Activated T-helper 2 cell treated with anti-CD3 and anti-CD28 coated beads, Interferon-gamma antibody, Interleukin-2, Interleukin-4, amounts not matched to agents 10 μg/mL and 5 μg/mL and 100 μg/mL, durations not matched to agents 14 hours and 24 hours and 36 hours (primary cell): ENCODE measurements at regions of chr1 and their contacts with region 1.

Region 1: GRCh38 chr1:168082008-168082876 is 54.5 kb downstream of the GPR161 start:
- DNase-seq: peak; percentile 62
- H3K4me3 Mint-ChIP-seq: no peak overlapping the region
- H3K27ac Mint-ChIP-seq: no peak overlapping the region
- H3K4me1 Mint-ChIP-seq: peaks cover 11% of the 10 kb centered on the region
- H3K27me3 Mint-ChIP-seq: peaks cover 2% of the 10 kb centered on the region

Region 2: GRCh38 chr1:167721617-167722151 is 360.6 kb before region 1 on chr1 and contains the start of gene MPZL1:
- intact Hi-C with region 1: loop called (anchors 5 kb)
- DNase-seq: peak; percentile 91
- H3K4me3 Mint-ChIP-seq: peak within 1 kb of the TSS; percentile 92
- H3K27ac Mint-ChIP-seq: peak within 1 kb of the TSS; percentile 91
- H3K4me1 Mint-ChIP-seq: peaks cover 50% of the 10 kb centered on the region
- H3K27me3 Mint-ChIP-seq: no peaks in the 10 kb centered on the region
- total RNA-seq, gene MPZL1: 36.7 and 40.5 TPM in 2 replicates

Region 3: GRCh38 chr1:168097921-168098528 is 15.8 kb after region 1 on chr1:
- intact Hi-C with region 1: no loop called
- DNase-seq: no peak
- H3K4me3 Mint-ChIP-seq: no peak overlapping the region
- H3K27ac Mint-ChIP-seq: no peak overlapping the region
- H3K4me1 Mint-ChIP-seq: no peaks in the 10 kb centered on the region
- H3K27me3 Mint-ChIP-seq: peaks cover 6% of the 10 kb centered on the region

Region 4: DNA sequence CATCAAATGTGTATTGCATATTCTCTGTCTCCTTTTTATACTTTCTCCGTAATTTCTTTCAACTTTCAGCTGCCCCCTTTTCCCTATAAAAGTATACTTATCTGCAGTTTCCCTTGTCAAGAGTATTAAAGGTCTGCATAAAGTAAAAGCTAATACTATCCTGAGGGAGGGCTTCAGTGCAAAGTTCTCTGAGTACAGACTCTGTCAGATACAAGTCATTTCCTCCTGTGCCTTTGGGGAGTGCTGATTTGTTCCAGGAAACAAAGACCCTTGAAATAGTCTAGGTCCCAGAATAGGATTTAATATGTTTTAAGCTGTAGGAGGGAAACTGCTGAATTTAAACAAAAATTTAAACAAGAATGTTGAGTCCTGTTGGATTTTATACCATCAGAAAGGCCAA is 42.8 kb after region 1 on chr1:
- intact Hi-C with region 1: no loop called
- DNase-seq: no peak
- H3K4me3 Mint-ChIP-seq: no peak overlapping the region
- H3K27ac Mint-ChIP-seq: no peak overlapping the region
- H3K4me1 Mint-ChIP-seq: no peaks in the 10 kb centered on the region
- H3K27me3 Mint-ChIP-seq: peaks cover 39% of the 10 kb centered on the region

Region 5: DNA sequence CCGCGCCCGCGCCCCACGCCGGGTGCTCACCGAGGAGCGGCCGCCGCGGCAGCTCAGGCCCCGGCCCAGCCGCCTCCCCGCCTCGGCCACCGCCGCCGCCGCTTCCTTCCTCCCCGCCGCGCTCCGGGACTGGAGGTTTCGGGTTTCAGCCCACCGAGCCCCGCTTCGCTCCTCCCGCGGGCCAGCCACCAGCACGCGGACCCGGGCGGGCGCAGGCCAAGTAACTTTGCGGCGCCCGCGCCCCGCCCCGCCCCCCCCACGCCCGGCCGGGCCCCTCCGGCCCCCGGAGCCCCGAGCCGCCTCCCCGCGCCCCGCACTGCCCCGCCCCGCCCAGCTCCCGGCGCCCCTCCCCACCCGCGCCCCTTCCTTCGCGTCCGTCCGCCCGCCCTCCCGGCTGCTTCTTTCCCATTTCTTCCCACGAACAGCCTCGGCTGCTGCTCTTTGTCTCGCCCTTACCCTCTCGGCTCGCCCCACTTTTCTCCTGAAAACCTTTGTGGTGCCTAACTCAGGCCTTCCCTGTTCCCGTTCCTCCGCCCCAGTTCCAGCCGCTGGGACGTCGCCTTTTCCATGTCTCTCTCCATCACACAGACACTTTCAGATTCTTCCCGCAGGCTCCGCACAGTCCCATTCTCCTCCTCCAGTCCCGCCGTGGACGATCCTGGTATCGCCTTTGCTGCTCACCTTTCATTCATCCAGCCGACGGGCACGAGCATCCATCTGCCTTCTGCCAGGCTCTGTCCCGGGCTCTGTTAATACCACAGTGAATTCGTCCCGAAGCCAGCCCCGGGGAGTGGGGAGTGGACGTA is 54.7 kb after region 1 on chr1 and contains the start of gene GPR161:
- intact Hi-C with region 1: loop called (anchors 5 kb)
- DNase-seq: peak; percentile 29
- H3K4me3 Mint-ChIP-seq: peak within 1 kb of the TSS; percentile 85
- H3K27ac Mint-ChIP-seq: peak within 1 kb of the TSS; percentile 33
- H3K4me1 Mint-ChIP-seq: peaks cover 16% of the 10 kb centered on the region
- H3K27me3 Mint-ChIP-seq: peaks cover 48% of the 10 kb centered on the region
- total RNA-seq, gene GPR161: 1.3 and 2.4 TPM in 2 replicates

Region 6: GRCh38 chr1:168321945-168322344 is 239.7 kb after region 1 on chr1:
- intact Hi-C with region 1: loop called (anchors 1 kb)
- DNase-seq: no peak
- H3K4me3 Mint-ChIP-seq: no peak overlapping the region
- H3K27ac Mint-ChIP-seq: peak overlapping the region; percentile 8
- H3K4me1 Mint-ChIP-seq: peaks cover 47% of the 10 kb centered on the region
- H3K27me3 Mint-ChIP-seq: no peaks in the 10 kb centered on the region